Activated CD4-positive, alpha-beta T cell treated with anti-CD3 and anti-CD28 coated beads for 36 hours (primary cell): ENCODE measurements at regions of chr9 and their contacts with region 1.

Region 1: DNA sequence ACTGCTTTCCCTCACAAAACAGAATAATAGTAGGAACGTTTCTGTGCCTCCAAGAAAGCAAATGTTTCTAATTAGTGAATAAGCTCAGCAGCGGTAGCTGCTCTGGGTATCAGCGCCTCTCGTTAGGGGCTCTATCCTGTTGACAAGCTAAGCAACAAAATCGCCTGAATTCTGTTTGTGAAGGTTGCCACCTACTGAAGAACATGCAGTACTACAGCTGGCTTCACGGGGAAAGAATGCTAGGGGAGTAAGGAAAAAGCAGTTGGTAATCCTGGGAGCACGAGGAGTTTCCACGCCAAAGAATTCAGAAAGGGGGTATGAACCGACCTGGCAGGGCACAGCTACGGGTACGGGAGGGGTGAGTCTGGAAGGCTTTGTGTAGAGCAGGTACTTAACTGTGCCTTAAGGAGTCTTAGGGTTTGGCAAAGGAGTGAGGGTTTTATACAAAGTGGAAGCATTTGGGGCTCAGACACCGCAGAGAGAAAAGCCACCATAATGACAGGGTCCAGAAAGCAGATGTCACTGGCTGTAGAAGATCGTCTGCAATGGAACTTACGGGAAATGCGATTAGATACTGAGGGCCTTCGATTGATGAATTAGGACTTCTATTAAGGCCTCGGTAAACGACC is 171.7 kb downstream of the TTC39B start:
- DNase-seq: peak; percentile 57
- ATAC-seq: peak; percentile 88
- H3K4me3 Mint-ChIP-seq: no peak overlapping the region
- H3K27ac Mint-ChIP-seq: no peak overlapping the region
- H3K4me1 Mint-ChIP-seq: peaks cover 7% of the 10 kb centered on the region
- H3K27me3 Mint-ChIP-seq: no peaks in the 10 kb centered on the region

Region 2: GRCh38 chr9:14616188-14616982 is 518.9 kb before region 1 on chr9:
- CTCF ChIA-PET with region 1: no interaction called
- POLR2A ChIA-PET with region 1: no interaction called
- intact Hi-C with region 1: loop called (anchors 2 to 10 kb)
- DNase-seq: no peak
- ATAC-seq: no peak
- H3K4me3 Mint-ChIP-seq: no peak overlapping the region
- H3K27ac Mint-ChIP-seq: no peak overlapping the region
- H3K4me1 Mint-ChIP-seq: no peaks in the 10 kb centered on the region
- H3K27me3 Mint-ChIP-seq: no peaks in the 10 kb centered on the region

Region 3: GRCh38 chr9:14846871-14847311 is 288.4 kb before region 1 on chr9:
- CTCF ChIA-PET with region 1: no interaction called
- POLR2A ChIA-PET with region 1: no interaction called
- intact Hi-C with region 1: loop called (anchors 2 to 5 kb)
- DNase-seq: peak; percentile 82
- ATAC-seq: peak; percentile 91
- H3K4me3 Mint-ChIP-seq: no peak overlapping the region
- H3K27ac Mint-ChIP-seq: no peak overlapping the region
- H3K4me1 Mint-ChIP-seq: no peaks in the 10 kb centered on the region
- H3K27me3 Mint-ChIP-seq: peaks cover 25% of the 10 kb centered on the region

Region 4: GRCh38 chr9:15058236-15058635 is 77.0 kb before region 1 on chr9:
- CTCF ChIA-PET with region 1: interaction called, 3 read pairs
- POLR2A ChIA-PET with region 1: no interaction called
- intact Hi-C with region 1: loop called in 1 of 2 experiments (anchors 10 kb)
- DNase-seq: no peak
- ATAC-seq: no peak
- H3K4me3 Mint-ChIP-seq: no peak overlapping the region
- H3K27ac Mint-ChIP-seq: no peak overlapping the region
- H3K4me1 Mint-ChIP-seq: no peaks in the 10 kb centered on the region
- H3K27me3 Mint-ChIP-seq: peaks cover 3% of the 10 kb centered on the region

Region 5: DNA sequence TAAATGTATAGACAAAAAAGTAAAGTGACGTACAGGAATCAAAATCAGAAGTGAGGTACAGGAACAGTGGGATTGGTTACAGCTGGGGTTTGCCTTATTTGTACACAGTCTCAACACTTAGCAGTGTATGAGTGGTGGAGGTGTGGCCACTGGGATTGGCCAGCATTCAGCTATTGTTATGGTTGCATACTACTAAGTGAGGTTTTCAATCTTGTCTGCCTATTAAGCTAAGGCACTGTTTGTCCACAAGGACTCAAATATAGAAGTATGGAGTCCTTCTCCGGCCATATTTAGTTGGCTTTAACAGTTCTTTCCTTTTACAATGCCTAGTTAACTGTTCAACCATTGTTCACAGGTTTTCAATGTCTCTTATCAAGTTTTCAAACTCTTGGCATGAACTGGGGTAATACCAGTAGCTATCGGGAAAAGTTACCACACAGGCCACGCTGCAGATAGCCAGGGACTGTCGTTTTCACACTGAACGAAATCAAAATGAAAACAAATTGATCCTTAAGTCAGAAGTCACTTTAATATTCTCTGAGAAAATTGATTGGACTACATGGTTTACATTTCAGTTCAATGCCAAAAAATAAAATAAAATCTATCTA is 49.0 kb before region 1 on chr9:
- CTCF ChIA-PET with region 1: no interaction called
- POLR2A ChIA-PET with region 1: no interaction called
- intact Hi-C with region 1: no loop called
- DNase-seq: no peak
- ATAC-seq: no peak
- H3K4me3 Mint-ChIP-seq: no peak overlapping the region
- H3K27ac Mint-ChIP-seq: no peak overlapping the region
- H3K4me1 Mint-ChIP-seq: no peaks in the 10 kb centered on the region
- H3K27me3 Mint-ChIP-seq: no peaks in the 10 kb centered on the region

Region 6: GRCh38 chr9:15116130-15116580 is 19.1 kb before region 1 on chr9:
- CTCF ChIA-PET with region 1: interaction called, 10 read pairs
- POLR2A ChIA-PET with region 1: no interaction called
- intact Hi-C with region 1: no loop called
- DNase-seq: no peak
- ATAC-seq: no peak
- H3K4me3 Mint-ChIP-seq: no peak overlapping the region
- H3K27ac Mint-ChIP-seq: no peak overlapping the region
- H3K4me1 Mint-ChIP-seq: peaks cover 8% of the 10 kb centered on the region
- H3K27me3 Mint-ChIP-seq: no peaks in the 10 kb centered on the region